ENCODE measurements at regions of chr6 and their contacts with region 1.

Region 1: DNA sequence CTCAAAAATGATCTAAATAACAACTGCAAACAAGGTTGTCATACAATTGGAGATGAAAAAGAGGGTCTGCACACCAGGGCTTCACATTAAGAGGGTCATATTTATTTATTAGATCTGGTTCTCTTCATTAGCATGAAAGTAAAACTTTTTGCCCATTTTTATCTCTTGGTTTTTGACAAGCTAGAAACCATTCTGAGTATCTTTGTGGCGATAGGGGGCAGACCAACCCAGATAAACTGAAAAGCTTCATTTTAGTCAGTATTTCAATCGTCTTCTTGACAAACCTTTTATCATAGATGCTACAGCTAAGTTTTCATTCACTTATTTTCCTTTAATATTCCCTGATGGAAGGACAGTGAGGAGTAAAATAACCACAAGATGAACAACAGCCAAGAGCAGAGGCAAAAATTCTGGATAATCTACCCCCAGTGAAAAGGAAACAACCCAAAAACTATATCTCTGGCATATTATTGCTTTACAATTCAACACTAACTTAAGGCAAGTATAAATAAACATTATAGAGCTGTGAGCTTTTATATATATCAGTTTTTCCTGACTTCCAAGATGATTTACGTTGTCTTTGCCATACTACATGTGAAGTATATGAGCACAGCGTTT is 45.2 kb downstream of the THEMIS start:
- DNase-seq: no peak
- ATAC-seq: peak; percentile 82
- H3K4me3 ChIP-seq: no peak overlapping the region
- H3K27ac ChIP-seq: no peak overlapping the region
- H3K4me1 ChIP-seq: no peaks in the 10 kb centered on the region
- H3K27me3 ChIP-seq: no peaks in the 10 kb centered on the region
- CTCF ChIP-seq: peak; percentile 29 to 49 (median 35); a peak in 4 of 6 replicates
- EP300 ChIP-seq: no peak
- POLR2A ChIP-seq: no peak
- RAD21 ChIP-seq: peak; percentile 48

Region 2: DNA sequence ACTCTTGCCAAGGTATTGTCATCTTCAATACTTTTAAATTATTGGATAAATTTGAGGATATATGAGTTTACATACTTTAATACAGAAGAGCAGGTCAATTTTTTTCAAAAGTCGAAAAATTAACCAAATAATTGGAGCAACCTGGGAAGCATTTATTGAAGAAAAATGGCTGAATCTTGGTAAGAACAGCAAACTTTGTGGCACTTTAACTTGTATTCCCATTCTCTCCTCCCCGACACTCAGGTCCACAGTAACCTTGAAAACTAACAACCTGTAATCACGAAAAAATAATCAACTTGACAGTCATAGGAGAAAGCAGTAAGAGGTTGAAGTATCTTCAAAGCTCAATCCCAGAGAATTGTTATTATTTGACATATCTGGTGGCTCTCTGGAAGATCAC is 10.4 kb before region 1 on chr6:
- CTCF ChIA-PET with region 1: interaction called, 10 read pairs
- POLR2A ChIA-PET with region 1: no interaction called
- RAD21 ChIA-PET with region 1: no interaction called
- SMC1A ChIA-PET with region 1: interaction called, 5 read pairs
- in situ Hi-C with region 1: no loop called
- intact Hi-C with region 1: no loop called
- DNase-seq: no peak
- ATAC-seq: no peak
- H3K4me3 ChIP-seq: no peak overlapping the region
- H3K27ac ChIP-seq: no peak overlapping the region
- H3K4me1 ChIP-seq: no peaks in the 10 kb centered on the region
- H3K27me3 ChIP-seq: no peaks in the 10 kb centered on the region
- CTCF ChIP-seq: no peak
- EP300 ChIP-seq: no peak
- POLR2A ChIP-seq: no peak
- RAD21 ChIP-seq: no peak

Region 3: DNA sequence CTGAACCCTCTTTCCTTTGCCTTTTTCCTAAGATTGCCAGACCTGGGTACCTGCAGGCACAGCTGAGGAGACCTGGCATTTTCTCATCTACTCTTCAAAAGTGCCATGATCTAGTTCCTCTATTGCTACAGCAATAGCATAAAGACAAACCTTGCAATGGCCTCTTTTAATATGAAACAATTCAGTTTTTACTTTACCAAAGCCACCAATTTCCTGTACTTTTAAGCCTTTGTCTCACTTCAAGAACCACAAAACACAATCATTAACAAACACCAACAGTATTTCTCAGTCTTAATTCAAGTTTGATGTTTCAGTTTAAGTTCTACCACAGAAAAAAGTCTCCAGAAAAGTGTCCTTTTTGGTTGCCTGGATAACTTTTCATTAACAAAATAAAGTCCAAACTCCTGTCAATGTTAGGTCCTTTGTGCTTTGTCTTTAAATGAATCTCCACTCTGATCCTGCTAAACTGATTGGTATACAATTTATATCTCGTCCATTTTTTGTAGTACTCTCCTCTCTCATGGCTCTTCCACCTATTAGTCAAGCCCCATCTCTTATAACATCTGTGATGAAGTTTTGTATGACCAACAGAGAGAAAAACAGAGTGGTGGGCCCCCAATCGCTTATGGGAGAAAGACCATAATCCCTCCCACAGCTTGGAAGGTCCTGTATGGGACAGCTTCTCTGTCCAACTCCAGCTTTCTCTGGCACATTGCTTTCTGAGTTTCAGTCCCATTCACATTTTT is 95.7 kb after region 1 on chr6:
- CTCF ChIA-PET with region 1: no interaction called
- POLR2A ChIA-PET with region 1: no interaction called
- RAD21 ChIA-PET with region 1: interaction called, 6 read pairs
- SMC1A ChIA-PET with region 1: interaction called, 7 read pairs
- in situ Hi-C with region 1: no loop called
- intact Hi-C with region 1: loop called (anchors 5 kb)
- DNase-seq: peak; percentile 51
- ATAC-seq: peak; percentile 87
- H3K4me3 ChIP-seq: no peak overlapping the region
- H3K27ac ChIP-seq: no peak overlapping the region
- H3K4me1 ChIP-seq: no peaks in the 10 kb centered on the region
- H3K27me3 ChIP-seq: no peaks in the 10 kb centered on the region
- CTCF ChIP-seq: no peak
- EP300 ChIP-seq: peak in 1 of 2 experiments; percentile 59; a peak in 2 of 4 replicates
- POLR2A ChIP-seq: no peak
- RAD21 ChIP-seq: no peak

Region 4: GRCh38 chr6:128057946-128058345 is 202.3 kb after region 1 on chr6:
- CTCF ChIA-PET with region 1: no interaction called
- POLR2A ChIA-PET with region 1: no interaction called
- RAD21 ChIA-PET with region 1: no interaction called
- SMC1A ChIA-PET with region 1: interaction called, 3 read pairs
- in situ Hi-C with region 1: no loop called
- intact Hi-C with region 1: loop called (anchors 10 kb)
- DNase-seq: no peak
- ATAC-seq: no peak
- H3K4me3 ChIP-seq: no peak overlapping the region
- H3K27ac ChIP-seq: no peak overlapping the region
- H3K4me1 ChIP-seq: no peaks in the 10 kb centered on the region
- H3K27me3 ChIP-seq: no peaks in the 10 kb centered on the region; a peak in 1 of 4 replicates
- CTCF ChIP-seq: no peak
- EP300 ChIP-seq: no peak
- POLR2A ChIP-seq: no peak
- RAD21 ChIP-seq: no peak

Region 5: GRCh38 chr6:128519132-128519930 is 663.7 kb after region 1 on chr6:
- CTCF ChIA-PET with region 1: no interaction called
- POLR2A ChIA-PET with region 1: no interaction called
- RAD21 ChIA-PET with region 1: interaction called, 4 read pairs
- SMC1A ChIA-PET with region 1: no interaction called
- in situ Hi-C with region 1: no loop called
- intact Hi-C with region 1: loop called (anchors 10 kb)
- DNase-seq: no peak
- ATAC-seq: peak; percentile 44
- H3K4me3 ChIP-seq: 0 out of 2 replicates have a peak overlapping the region, but pooled peaks have one; percentile 50
- H3K27ac ChIP-seq: no peak overlapping the region
- H3K4me1 ChIP-seq: peaks cover 5% of the 10 kb centered on the region
- H3K27me3 ChIP-seq: peaks cover 11 to 29% of the 10 kb centered on the region in 2 experiments
- CTCF ChIP-seq: no peak
- EP300 ChIP-seq: no peak
- POLR2A ChIP-seq: no peak
- RAD21 ChIP-seq: no peak

Region 6: GRCh38 chr6:129370268-129370916 is 1514.7 kb after region 1 on chr6:
- CTCF ChIA-PET with region 1: interaction called, 12 read pairs
- POLR2A ChIA-PET with region 1: no interaction called
- RAD21 ChIA-PET with region 1: no interaction called
- SMC1A ChIA-PET with region 1: no interaction called
- in situ Hi-C with region 1: no loop called
- intact Hi-C with region 1: no loop called
- DNase-seq: no peak
- ATAC-seq: peak; percentile 61; the same call in 2 of the 3 replicates
- H3K4me3 ChIP-seq: no peak overlapping the region
- H3K27ac ChIP-seq: no peak overlapping the region
- H3K4me1 ChIP-seq: no peaks in the 10 kb centered on the region
- H3K27me3 ChIP-seq: no peaks in the 10 kb centered on the region
- CTCF ChIP-seq: peak; percentile 55 to 63 (median 60)
- EP300 ChIP-seq: no peak
- POLR2A ChIP-seq: no peak
- RAD21 ChIP-seq: peak; percentile 62